ENCODE measurements at regions of chr12 and their contacts with region 1.

Region 1: GRCh38 chr12:57058454-57058853 is 8.5 kb upstream of the MYO1A start:
- DNase-seq: peak; percentile 20
- ATAC-seq: peak; percentile 54
- H3K4me3 ChIP-seq: no peak overlapping the region
- H3K27ac ChIP-seq: peak overlapping the region; percentile 6; the same call in 1 of the 2 replicates
- H3K4me1 ChIP-seq: peaks cover 17% of the 10 kb centered on the region
- H3K27me3 ChIP-seq: no peaks in the 10 kb centered on the region
- CTCF ChIP-seq: no peak
- EP300 ChIP-seq: no peak
- POLR2A ChIP-seq: no peak
- RAD21 ChIP-seq: no peak

Region 2: DNA sequence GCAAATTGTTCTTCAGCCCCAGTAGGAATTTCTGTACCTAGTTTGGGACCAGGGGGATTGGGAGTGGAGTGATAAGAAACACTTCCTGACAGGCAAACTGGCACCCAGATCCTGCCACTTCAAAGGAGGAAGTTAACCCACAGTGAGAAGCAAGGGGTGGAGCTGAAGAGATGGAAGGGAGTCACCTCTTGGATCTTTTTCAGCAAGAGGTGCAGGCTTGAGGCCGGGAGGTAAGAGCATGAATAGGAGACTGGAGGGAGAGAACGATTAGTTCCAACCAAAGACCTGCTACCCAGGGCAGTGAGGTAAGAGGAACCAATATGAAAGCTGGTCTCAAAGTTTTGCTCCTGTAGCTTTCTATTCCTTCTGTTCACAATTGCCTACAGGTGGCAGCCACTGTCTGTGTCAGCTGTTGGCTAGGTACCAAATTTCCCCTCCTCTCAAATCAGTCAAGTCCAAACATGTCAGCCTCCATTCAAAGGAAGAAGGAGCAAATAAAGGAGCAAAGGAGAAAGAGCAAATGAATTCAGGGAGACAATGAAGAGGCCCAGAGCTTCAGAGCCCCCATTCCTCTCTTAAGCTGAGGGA is 27.2 kb before region 1 on chr12:
- CTCF ChIA-PET with region 1: interaction called, 64 read pairs
- POLR2A ChIA-PET with region 1: interaction called, 5 read pairs
- RAD21 ChIA-PET with region 1: interaction called, 13 read pairs
- SMC1A ChIA-PET with region 1: interaction called, 19 read pairs
- in situ Hi-C with region 1: no loop called
- intact Hi-C with region 1: no loop called
- DNase-seq: no peak
- ATAC-seq: peak; percentile 81
- H3K4me3 ChIP-seq: no peak overlapping the region
- H3K27ac ChIP-seq: peak overlapping the region; percentile 25; the same call in 1 of the 2 replicates
- H3K4me1 ChIP-seq: peaks cover 11% of the 10 kb centered on the region
- H3K27me3 ChIP-seq: no peaks in the 10 kb centered on the region; a peak in 1 of 4 replicates
- CTCF ChIP-seq: peak; percentile 3 to 35 (median 26); a peak in 3 of 6 replicates
- EP300 ChIP-seq: no peak
- POLR2A ChIP-seq: no peak
- RAD21 ChIP-seq: peak; percentile 50